Tibial artery (tissue), 4 donors: ENCODE measurements at regions of chrX and their contacts with region 1.

Region 1: GRCh38 chrX:136147315-136147901 is at the start of gene FHL1:
- DNase-seq: peak; percentile 59 to 86
- H3K4me3 ChIP-seq: peak within 1 kb of the TSS; percentile 87 to 89
- H3K27ac ChIP-seq: peak within 1 kb of the TSS; percentile 98
- H3K4me1 ChIP-seq: peaks cover 0 to 14% (median 0%) of the 10 kb centered on the region in 4 donors
- H3K27me3 ChIP-seq: no peaks in the 10 kb centered on the region
- CTCF ChIP-seq: no peak

Region 2: DNA sequence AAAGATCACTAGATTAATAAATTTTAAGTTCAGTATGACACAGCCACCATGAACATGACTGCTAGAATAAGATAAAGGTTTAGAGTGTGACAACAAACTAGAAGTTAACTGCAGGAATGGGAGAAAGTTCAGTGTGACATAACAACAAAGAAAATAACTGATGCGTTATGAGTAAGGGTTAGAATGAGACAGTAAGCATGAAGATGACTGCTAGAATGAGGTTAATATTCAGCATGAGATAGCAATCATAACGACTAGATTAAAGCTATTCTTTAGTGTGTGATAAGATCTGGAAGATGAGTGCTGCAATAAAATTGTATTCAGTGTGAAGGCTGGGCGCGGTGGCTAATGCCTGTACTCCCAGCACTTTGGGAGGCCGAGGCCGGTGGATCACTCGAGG is 774.1 kb before region 1 on chrX:
- intact Hi-C with region 1: no loop called
- DNase-seq: no peak
- H3K4me3 ChIP-seq: no peak overlapping the region
- H3K27ac ChIP-seq: no peak overlapping the region
- H3K4me1 ChIP-seq: no peaks in the 10 kb centered on the region
- H3K27me3 ChIP-seq: no peaks in the 10 kb centered on the region
- CTCF ChIP-seq: no peak

Region 3: GRCh38 chrX:135973548-135974278 is 173.7 kb before region 1 on chrX and contains the start of gene MMGT1:
- intact Hi-C with region 1: no loop called
- DNase-seq: peak; percentile 78 to 88
- H3K4me3 ChIP-seq: peak within 1 kb of the TSS; percentile 79 to 83
- H3K27ac ChIP-seq: peak within 1 kb of the TSS; percentile 86 to 94
- H3K4me1 ChIP-seq: peaks cover 0 to 22% (median 9%) of the 10 kb centered on the region in 4 donors
- H3K27me3 ChIP-seq: no peaks in the 10 kb centered on the region
- CTCF ChIP-seq: no peak

Region 4: GRCh38 chrX:136065044-136065671 is 82.2 kb before region 1 on chrX:
- intact Hi-C with region 1: loop called (anchors 10 kb)
- DNase-seq: peak; percentile 28 to 70
- H3K4me3 ChIP-seq: no peak overlapping the region
- H3K27ac ChIP-seq: peak overlapping the region; percentile 84 to 92
- H3K4me1 ChIP-seq: peaks cover 0 to 59% (median 12%) of the 10 kb centered on the region in 4 donors
- H3K27me3 ChIP-seq: no peaks in the 10 kb centered on the region
- CTCF ChIP-seq: no peak